CD4-positive, alpha-beta memory T cell (primary cell): ENCODE measurements at regions of chr20 and their contacts with region 1.

Region 1: GRCh38 chr20:8389381-8390036 is 257.4 kb downstream of the PLCB1 start:
- DNase-seq: peak in 4 of 5 donors; percentile 29 to 37 (median 32)
- H3K4me3 ChIP-seq: no peak overlapping the region
- H3K4me3 Mint-ChIP-seq: no peak overlapping the region
- H3K27ac ChIP-seq: no peak overlapping the region
- H3K27ac Mint-ChIP-seq: no peak overlapping the region
- H3K4me1 ChIP-seq: no peaks in the 10 kb centered on the region
- H3K4me1 Mint-ChIP-seq: peaks cover 9 to 18% (median 12%) of the 10 kb centered on the region in 4 donors
- H3K27me3 ChIP-seq: no peaks in the 10 kb centered on the region
- H3K27me3 Mint-ChIP-seq: peaks cover 0 to 1% of the 10 kb centered on the region in 2 donors

Region 2: DNA sequence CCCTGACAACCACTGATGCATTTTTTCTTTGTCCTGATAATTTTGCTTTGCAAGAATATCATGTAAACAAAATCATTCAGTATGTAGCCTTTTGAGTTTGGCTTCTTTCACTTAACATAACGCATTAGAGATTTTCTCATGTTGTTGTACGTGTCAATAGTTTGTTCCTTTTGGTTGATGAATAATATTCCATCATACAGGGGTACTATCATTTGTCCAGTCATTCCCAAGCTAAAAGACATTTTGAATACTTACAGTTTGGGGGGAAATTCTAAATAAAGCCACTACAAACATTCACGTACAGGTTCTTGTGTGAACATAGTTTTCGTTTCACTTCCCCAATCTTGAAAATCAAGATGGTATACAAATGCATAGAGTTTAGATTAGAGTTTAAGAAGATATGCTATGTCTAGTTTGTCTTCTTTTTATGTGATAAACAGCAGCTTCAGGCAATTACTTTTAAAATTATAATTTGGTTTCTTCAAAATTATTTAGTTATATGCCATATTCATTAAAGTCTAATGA is 454.4 kb before region 1 on chr20:
- CTCF ChIA-PET with region 1: interaction called, 16 read pairs
- POLR2A ChIA-PET with region 1: no interaction called
- intact Hi-C with region 1: loop called (anchors 1 kb)
- DNase-seq: no peak
- H3K4me3 ChIP-seq: no peak overlapping the region
- H3K4me3 Mint-ChIP-seq: no peak overlapping the region
- H3K27ac ChIP-seq: no peak overlapping the region
- H3K27ac Mint-ChIP-seq: no peak overlapping the region
- H3K4me1 ChIP-seq: no peaks in the 10 kb centered on the region
- H3K4me1 Mint-ChIP-seq: peaks cover 0 to 5% (median 0%) of the 10 kb centered on the region in 4 donors
- H3K27me3 ChIP-seq: no peaks in the 10 kb centered on the region
- H3K27me3 Mint-ChIP-seq: peaks cover 5 to 21% of the 10 kb centered on the region in 2 donors

Region 3: DNA sequence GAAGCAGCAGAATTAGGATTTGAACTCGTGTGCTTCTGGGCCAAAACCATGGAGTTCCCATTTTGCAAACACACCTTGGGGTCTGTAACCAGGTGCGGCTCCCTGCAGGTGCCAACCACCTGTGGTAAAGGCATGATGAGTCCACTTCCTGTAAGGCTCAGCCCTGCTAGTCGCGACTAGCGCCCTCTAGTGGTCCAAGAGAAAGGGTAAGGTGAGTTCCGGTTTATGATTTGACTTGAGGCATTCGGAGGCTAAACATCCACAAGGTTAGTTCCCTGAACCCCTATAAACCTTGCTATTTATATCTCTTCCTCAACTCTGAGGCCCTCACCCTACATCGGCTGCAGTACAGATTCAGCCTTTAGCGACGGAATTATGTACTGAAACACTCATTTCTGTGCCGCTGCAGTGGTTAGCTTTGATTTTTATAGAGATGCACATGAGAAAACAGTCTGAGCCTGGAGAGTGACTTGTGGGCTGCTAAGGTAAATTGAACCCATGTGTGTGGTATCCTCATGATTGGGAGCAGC is 84.0 kb before region 1 on chr20:
- CTCF ChIA-PET with region 1: interaction called, 4 read pairs
- POLR2A ChIA-PET with region 1: no interaction called
- intact Hi-C with region 1: loop called (anchors 2 kb)
- DNase-seq: peak; percentile 71 to 79 (median 73)
- H3K4me3 ChIP-seq: no peak overlapping the region
- H3K4me3 Mint-ChIP-seq: peak overlapping the region in 3 of 8 donors; percentile 1 to 31 (median 13)
- H3K27ac ChIP-seq: no peak overlapping the region
- H3K27ac Mint-ChIP-seq: peak overlapping the region in 5 of 7 donors; percentile 3 to 67 (median 47)
- H3K4me1 ChIP-seq: no peaks in the 10 kb centered on the region
- H3K4me1 Mint-ChIP-seq: peaks cover 3 to 12% (median 7%) of the 10 kb centered on the region in 4 donors
- H3K27me3 ChIP-seq: no peaks in the 10 kb centered on the region
- H3K27me3 Mint-ChIP-seq: no peaks in the 10 kb centered on the region

Region 4: DNA sequence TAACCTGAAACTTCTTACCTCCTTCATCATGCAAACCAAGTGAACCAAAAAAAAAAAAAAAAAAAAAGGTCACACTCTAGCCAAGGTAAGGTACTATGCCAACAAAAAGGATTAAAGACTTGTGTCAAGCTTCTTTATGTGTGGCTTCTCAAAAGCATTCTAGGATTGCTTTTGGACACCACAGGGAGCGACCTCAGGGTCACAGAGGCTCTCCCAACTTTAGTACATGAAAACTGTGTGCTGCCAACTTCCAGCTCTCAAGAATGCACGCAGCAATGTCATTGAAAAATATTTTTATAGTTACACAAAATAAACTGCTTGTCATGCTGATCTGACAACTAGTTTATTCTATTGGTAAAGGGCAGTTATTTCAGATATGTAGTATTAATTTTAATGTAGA is 13.6 kb before region 1 on chr20:
- CTCF ChIA-PET with region 1: interaction called, 11 read pairs
- POLR2A ChIA-PET with region 1: no interaction called
- intact Hi-C with region 1: no loop called
- DNase-seq: no peak
- H3K4me3 ChIP-seq: no peak overlapping the region
- H3K4me3 Mint-ChIP-seq: no peak overlapping the region
- H3K27ac ChIP-seq: no peak overlapping the region
- H3K27ac Mint-ChIP-seq: no peak overlapping the region
- H3K4me1 ChIP-seq: no peaks in the 10 kb centered on the region
- H3K4me1 Mint-ChIP-seq: peaks cover 0 to 9% (median 3%) of the 10 kb centered on the region in 4 donors
- H3K27me3 ChIP-seq: no peaks in the 10 kb centered on the region
- H3K27me3 Mint-ChIP-seq: no peaks in the 10 kb centered on the region